A549 (cell line): ENCODE measurements at regions of chr10 and their contacts with region 1.

Region 1: DNA sequence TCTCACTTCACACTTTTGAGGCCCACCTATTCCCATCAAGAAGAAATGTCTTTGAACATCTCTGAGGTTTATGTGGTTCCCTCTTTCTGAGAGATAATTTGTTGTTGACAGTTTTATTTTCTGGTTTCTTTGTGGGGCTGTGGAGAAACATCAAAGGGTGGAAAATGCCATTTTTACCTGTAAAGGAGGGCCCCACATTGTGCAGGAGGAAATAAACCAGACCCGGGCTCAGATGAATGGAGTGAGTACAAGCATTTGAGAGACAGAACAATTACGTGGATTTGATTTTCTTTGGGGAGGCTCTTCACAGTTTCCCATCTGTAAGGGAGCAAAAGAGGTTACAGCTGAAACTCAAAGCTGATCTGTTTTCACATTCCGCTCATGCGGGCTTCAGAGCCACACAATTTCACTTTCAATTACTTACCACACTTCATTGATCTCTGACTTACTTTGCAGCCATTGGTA is 29.8 kb downstream of the ITPRIP start:
- DNase-seq: no peak
- ATAC-seq: no peak
- H3K4me3 ChIP-seq: no peak overlapping the region
- H3K27ac ChIP-seq: no peak overlapping the region
- H3K4me1 ChIP-seq: peaks cover 10% of the 10 kb centered on the region; the same call in 1 of the 3 replicates
- CTCF ChIP-seq: no peak
- EP300 ChIP-seq: no peak
- POLR2A ChIP-seq: no peak
- RAD21 ChIP-seq: no peak

Region 2: GRCh38 chr10:104322416-104322782 is 13.9 kb after region 1 on chr10:
- CTCF ChIA-PET with region 1: interaction called, 66 read pairs
- POLR2A ChIA-PET with region 1: interaction called, 3 read pairs
- DNase-seq: no peak
- ATAC-seq: no peak
- H3K4me3 ChIP-seq: no peak overlapping the region
- H3K27ac ChIP-seq: peak overlapping the region in 1 of 2 experiments; percentile 27; a peak in 1 of 6 replicates
- H3K4me1 ChIP-seq: peaks cover 37% of the 10 kb centered on the region
- CTCF ChIP-seq: no peak
- EP300 ChIP-seq: no peak
- POLR2A ChIP-seq: no peak
- RAD21 ChIP-seq: no peak

Region 3: DNA sequence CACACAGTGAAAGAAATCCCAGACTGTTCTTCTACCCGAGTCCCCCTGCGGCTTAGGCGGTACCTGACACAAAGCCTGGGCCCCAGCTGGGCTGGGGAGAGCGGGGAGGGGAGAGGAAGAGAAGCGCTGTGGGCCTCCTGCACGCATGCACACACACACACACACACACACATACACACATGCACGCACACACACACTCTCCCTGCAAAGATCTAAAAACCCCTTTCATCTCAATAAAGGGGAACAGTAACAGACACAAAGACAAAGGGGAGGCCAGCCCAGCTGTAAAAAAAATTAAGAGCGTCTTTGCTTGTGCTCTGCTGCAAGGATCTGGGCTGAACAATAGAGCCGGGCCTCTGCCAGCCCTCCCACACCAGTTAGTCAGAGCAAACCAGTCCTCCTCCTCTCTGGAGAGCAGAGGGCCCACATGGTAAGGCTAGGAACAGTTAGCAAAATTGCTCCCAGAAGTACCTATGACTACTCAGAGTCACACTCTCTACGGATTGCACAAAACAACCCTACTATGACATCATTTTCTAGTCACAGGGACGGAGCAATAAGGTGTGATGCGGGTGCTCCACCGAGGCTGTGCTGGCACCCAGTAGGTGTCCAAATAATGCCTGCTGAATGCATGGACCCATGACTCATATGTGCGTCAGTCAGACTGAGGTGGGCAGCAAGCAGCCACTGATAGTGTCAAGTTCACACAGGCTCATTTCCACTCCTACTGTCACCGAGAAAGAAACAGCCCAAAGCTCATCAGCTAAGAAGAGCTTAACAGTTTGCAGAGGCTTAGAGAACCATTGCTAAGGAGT is 20.6 kb after region 1 on chr10:
- CTCF ChIA-PET with region 1: interaction called, 19 read pairs
- POLR2A ChIA-PET with region 1: interaction called, 3 read pairs
- DNase-seq: peak; percentile 51 to 90
- ATAC-seq: peak; percentile 78 to 79
- H3K4me3 ChIP-seq: peak overlapping the region; percentile 33; the same call in 2 of the 3 replicates
- H3K27ac ChIP-seq: peak overlapping the region; percentile 93 to 97
- H3K4me1 ChIP-seq: peaks cover 77% of the 10 kb centered on the region
- CTCF ChIP-seq: no peak
- EP300 ChIP-seq: peak; percentile 74 to 76; a peak in 3 of 5 replicates
- POLR2A ChIP-seq: no peak
- RAD21 ChIP-seq: 0 out of 5 replicates have a peak, but pooled peaks of 1 of the 2 experiments have one; percentile 26

Region 4: DNA sequence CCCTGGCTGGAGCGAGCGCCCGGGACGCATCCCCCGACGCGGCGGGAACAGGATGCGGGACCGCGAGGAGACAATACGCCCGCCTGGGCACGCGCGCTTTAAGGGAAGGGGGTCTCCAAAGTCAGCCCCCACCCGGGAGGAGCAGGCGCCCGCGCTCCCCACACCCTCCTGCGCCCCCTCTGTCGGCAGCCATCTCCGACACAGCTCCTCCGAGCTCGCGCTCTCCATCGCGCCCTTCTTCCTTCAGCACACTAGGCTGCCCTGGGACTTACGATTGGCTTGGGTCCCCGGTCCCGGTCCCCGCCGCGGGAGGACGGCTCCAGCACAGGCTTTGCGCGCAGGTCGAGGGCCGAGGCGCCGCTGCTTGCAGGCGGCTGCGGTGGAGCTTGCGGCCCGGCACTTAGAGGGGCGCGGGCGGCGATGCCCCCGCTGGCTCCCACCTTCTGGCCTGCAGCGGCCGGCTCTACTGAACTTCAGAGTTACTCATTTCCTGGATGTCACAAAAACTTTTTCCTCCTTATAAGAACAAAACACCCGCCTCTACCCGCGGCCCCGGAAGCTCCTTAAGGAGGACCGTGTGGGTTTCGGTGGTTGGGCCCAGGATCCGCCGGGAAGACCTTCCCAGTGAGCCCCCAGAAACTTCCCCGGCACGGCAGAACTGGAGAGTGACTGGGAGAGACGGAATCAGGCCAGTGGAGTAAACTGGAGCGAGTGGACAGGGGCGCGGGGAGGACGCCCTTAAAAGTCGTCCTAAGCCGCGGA is 29.7 kb after region 1 on chr10 and contains the start of gene ITPRIP:
- CTCF ChIA-PET with region 1: interaction called, 44 read pairs
- POLR2A ChIA-PET with region 1: interaction called, 14 read pairs
- DNase-seq: peak; percentile 78 to 81
- ATAC-seq: peak; percentile 84 to 87
- H3K4me3 ChIP-seq: peak within 1 kb of the TSS; percentile 67
- H3K27ac ChIP-seq: peak within 1 kb of the TSS; percentile 85 to 93
- H3K4me1 ChIP-seq: peaks cover 40% of the 10 kb centered on the region
- CTCF ChIP-seq: no peak; the same call in 2 of the 3 replicates
- EP300 ChIP-seq: no peak
- POLR2A ChIP-seq: peak; percentile 58
- RAD21 ChIP-seq: no peak
- polyA plus RNA-seq, gene ITPRIP: 14.8 and 17.4 TPM in 2 replicates